Posterior vena cava (tissue), 2 donors: ENCODE measurements at regions of chr3 and their contacts with region 1.

Region 1: DNA sequence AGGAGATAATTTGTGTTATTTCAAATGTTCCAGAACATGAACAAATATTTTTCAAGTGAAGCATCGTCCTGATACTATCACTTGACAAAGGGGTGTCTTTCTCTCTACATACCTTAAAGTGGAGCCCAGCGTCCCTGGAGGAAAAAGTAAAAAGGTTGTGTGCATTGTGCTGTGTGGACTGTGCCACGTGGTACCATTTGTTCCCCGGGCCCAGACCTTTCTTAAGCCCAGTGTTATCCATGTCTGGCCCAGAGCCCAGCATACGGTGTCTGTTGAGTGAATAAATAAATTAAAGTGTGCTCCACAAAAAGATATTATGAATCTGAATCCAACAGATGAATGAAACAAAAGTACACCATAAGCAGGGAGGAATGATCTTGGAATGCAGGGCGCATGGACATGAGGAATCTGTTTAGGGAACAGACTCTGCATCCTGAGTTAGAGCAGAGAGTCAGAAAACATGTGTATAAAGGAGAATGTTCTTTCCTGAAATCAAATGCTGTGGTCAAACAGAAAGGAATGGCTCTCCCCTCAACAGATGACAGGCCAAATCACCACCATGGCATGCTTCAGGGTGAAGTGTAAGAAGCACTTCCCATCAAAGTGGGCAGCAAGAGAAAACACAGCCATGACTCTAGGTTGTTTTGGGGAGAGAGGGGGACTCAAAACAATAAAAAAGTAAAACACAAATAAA is 8.1 kb upstream of the PRSS50 start:
- DNase-seq: peak; percentile 19

Region 2: DNA sequence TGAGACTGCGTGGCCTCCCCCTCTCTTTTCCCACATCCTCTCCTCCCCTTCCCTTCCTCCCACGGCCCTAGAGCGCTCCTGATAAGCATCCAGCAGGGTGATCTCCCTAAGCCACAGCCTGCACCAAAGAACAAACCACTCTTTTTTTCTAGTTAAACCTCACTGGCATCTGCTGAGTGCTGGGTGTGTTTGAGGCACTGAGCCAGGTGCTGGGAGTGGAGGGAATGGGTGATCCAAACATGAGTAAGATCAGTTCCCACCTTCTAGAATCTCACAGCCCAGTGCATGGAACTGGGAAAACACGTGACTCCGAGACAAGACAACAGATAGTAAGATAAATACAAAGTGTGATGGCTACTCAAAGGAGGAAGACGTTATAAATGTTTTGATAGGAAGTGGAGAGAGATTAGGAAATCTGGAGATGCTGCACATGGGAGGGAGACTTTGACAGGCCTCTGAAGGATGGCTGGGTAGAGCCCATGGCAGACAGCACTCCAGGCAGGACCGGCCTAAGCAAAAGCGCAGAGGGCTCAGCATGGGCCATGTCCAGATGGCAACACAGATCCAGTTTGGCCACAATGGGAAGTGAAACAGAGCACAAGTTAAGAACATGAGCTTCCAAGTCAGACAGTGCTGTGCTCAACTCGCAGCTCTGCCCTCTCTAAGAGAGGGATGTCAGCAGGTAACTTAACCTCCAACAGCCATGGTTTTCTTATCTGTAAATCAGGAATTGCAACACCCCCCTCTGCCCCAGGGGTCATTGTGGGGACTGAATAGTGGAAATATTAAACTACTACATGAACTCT is 427.9 kb before region 1 on chr3:
- intact Hi-C with region 1: loop called in 1 of 2 experiments (anchors 10 kb)
- DNase-seq: no peak

Region 3: GRCh38 chr3:46763168-46763567 is 37.4 kb after region 1 on chr3:
- intact Hi-C with region 1: no loop called
- DNase-seq: no peak